CD8-positive, alpha-beta memory T cell (primary cell): ENCODE measurements at regions of chr12 and their contacts with region 1.

Region 1: DNA sequence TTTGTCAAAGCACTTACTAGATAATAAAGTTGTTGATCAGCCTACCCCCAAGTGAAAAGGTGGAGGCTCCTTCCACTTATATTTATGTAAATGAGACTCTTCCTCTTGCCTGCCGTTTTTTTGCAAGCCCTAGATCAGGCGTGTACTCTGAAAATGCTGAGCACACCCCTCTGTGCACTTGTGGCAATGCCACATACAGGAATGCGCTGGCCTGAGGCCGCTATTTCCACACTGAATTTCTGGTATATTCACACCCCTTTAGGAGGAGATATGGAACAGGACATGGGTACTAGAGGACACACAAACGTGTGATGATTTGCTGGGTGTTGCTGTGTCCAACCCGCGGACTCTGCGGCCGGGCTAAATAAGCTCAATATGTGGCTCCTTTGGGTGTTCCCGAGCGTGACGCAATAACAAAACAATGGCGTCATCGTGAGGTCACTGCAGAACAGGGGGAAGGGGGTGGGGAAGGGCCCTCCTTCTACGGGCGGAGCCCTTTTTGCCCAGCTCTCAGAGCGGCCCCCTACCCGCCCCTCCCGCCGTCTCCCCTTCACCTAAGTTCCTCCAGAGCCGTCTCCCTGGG is 554 bp upstream of the TSPAN31 start:
- DNase-seq: peak in 3 of 5 donors; percentile 51 to 86 (median 66)
- H3K4me3 ChIP-seq: peak overlapping the region; percentile 74
- H3K4me3 Mint-ChIP-seq: peak overlapping the region; percentile 85 to 96 (median 90)
- H3K27ac ChIP-seq: peak overlapping the region; percentile 89
- H3K27ac Mint-ChIP-seq: peak overlapping the region; percentile 84 to 99 (median 97)
- H3K4me1 ChIP-seq: peaks cover 51% of the 10 kb centered on the region
- H3K4me1 Mint-ChIP-seq: peaks cover 51 to 67% (median 57%) of the 10 kb centered on the region in 3 donors
- H3K27me3 ChIP-seq: no peaks in the 10 kb centered on the region
- H3K27me3 Mint-ChIP-seq: peaks cover 0 to 5% of the 10 kb centered on the region in 2 donors

Region 2: GRCh38 chr12:57352166-57352565 is 392.1 kb before region 1 on chr12:
- CTCF ChIA-PET with region 1: no interaction called
- POLR2A ChIA-PET with region 1: no interaction called
- DNase-seq: no peak
- H3K4me3 ChIP-seq: no peak overlapping the region
- H3K4me3 Mint-ChIP-seq: no peak overlapping the region
- H3K27ac ChIP-seq: no peak overlapping the region
- H3K27ac Mint-ChIP-seq: no peak overlapping the region
- H3K4me1 ChIP-seq: no peaks in the 10 kb centered on the region
- H3K4me1 Mint-ChIP-seq: peaks cover 1 to 7% (median 4%) of the 10 kb centered on the region in 3 donors
- H3K27me3 ChIP-seq: no peaks in the 10 kb centered on the region
- H3K27me3 Mint-ChIP-seq: no peaks in the 10 kb centered on the region

Region 3: DNA sequence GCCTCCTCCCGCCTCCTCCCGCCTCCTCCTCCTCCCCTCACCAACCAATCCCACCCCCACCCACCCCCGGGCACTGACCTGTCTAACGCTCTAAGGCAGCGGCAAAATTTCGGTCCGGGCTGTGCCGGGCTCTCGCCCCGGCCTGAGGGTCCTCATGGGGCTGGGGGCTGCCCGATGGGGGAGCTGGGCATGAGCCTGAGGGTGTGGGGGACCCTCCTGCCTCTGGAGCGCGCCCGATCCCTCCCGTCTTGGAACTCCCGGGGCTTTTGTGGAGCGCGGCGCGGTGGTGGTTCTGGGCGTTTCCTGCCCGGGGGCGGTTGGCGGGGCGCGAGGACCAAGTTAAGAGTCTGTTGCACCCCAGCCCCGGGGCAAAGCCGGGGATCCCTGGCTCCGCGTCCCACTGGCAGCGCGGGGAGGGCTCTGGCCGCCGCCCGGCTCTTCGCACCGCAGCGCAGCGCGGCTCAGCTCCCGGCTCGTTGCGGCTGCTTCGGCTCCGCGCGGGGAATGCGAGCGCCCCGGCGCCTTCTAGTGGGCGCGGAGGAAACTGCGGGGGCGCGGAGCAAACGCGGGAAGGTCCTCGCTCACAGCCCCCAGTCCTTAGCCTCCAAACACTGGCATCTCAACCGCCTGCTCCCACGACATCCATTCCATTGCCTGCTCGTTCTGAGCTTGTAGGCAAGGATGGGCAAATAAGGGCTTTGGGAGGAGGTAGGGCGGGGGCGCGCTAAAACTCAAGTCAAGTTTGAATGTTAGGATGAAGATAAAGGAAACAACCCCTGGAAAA is 111.4 kb before region 1 on chr12 and contains the start of gene B4GALNT1:
- CTCF ChIA-PET with region 1: no interaction called
- POLR2A ChIA-PET with region 1: no interaction called
- DNase-seq: peak; percentile 44 to 71 (median 57)
- H3K4me3 ChIP-seq: peak within 1 kb of the TSS; percentile 49
- H3K4me3 Mint-ChIP-seq: peak within 1 kb of the TSS; percentile 26 to 84 (median 71)
- H3K27ac ChIP-seq: no peak within 1 kb of the TSS
- H3K27ac Mint-ChIP-seq: peak within 1 kb of the TSS in 3 of 8 donors; percentile 14 to 33 (median 19)
- H3K4me1 ChIP-seq: peaks cover 11% of the 10 kb centered on the region
- H3K4me1 Mint-ChIP-seq: peaks cover 0 to 15% (median 8%) of the 10 kb centered on the region in 3 donors
- H3K27me3 ChIP-seq: peaks cover 22% of the 10 kb centered on the region
- H3K27me3 Mint-ChIP-seq: peaks cover 35 to 59% of the 10 kb centered on the region in 2 donors
- total RNA-seq, gene B4GALNT1: 2.9 to 4.1 TPM

Region 4: GRCh38 chr12:57726151-57726883 is 18.0 kb before region 1 on chr12:
- CTCF ChIA-PET with region 1: interaction called, 11 read pairs
- POLR2A ChIA-PET with region 1: interaction called, 4 read pairs
- DNase-seq: peak in 1 of 5 donors; percentile 18
- H3K4me3 ChIP-seq: no peak overlapping the region
- H3K4me3 Mint-ChIP-seq: peak overlapping the region in 1 of 7 donors; percentile 58
- H3K27ac ChIP-seq: no peak overlapping the region
- H3K27ac Mint-ChIP-seq: no peak overlapping the region
- H3K4me1 ChIP-seq: no peaks in the 10 kb centered on the region
- H3K4me1 Mint-ChIP-seq: peaks cover 9 to 29% (median 15%) of the 10 kb centered on the region in 3 donors
- H3K27me3 ChIP-seq: no peaks in the 10 kb centered on the region
- H3K27me3 Mint-ChIP-seq: peaks cover 0 to 1% of the 10 kb centered on the region in 2 donors

Region 5: DNA sequence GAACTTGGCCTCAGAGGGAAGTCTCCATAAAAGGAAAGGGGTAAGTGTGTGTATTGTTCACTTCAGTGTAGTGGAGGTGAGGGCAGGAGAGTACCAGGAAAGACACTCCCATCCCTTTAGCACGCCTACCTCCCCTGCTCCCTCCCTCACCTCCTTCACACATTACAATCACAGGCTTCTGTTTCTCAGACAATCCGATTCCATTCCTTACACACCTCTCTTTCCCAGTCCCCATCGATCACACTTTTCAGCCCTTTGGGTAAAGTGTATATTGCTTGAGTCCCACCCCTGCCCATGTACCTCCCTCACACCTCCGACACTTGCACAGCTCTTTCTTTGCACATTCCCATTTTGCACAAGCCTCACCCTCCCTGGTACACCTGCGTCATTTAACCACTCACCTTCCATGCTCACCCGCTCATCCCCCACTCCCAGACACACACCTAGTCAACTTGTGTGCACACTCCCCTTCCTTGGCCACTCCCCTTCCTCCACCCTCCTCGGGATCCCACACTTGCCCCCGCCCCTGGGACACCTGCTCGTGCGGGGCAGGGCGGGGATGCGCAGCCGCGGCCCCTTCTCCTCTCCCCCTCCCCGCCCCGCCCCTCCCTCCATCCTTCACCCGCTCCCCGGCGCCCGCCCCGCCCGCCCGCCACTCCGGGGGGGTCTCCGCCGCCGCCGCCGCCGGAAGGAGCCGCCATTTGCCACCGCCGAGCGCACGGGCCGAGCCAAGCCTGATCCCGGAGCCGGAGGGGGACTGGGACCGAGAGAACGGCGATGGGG is 10.3 kb after region 1 on chr12 and contains the start of gene MARCHF9:
- CTCF ChIA-PET with region 1: interaction called, 11 read pairs
- POLR2A ChIA-PET with region 1: interaction called, 7 read pairs
- DNase-seq: peak; percentile 76 to 92 (median 81)
- H3K4me3 ChIP-seq: peak within 1 kb of the TSS; percentile 65
- H3K4me3 Mint-ChIP-seq: peak within 1 kb of the TSS; percentile 88 to 97 (median 94)
- H3K27ac ChIP-seq: peak within 1 kb of the TSS; percentile 69
- H3K27ac Mint-ChIP-seq: peak within 1 kb of the TSS; percentile 93 to 100 (median 97)
- H3K4me1 ChIP-seq: peaks cover 50% of the 10 kb centered on the region
- H3K4me1 Mint-ChIP-seq: peaks cover 55 to 71% (median 65%) of the 10 kb centered on the region in 3 donors
- H3K27me3 ChIP-seq: no peaks in the 10 kb centered on the region
- H3K27me3 Mint-ChIP-seq: peaks cover 0 to 2% of the 10 kb centered on the region in 2 donors
- total RNA-seq, gene MARCHF9: 26.3 to 27.2 TPM